Dorsolateral prefrontal cortex (tissue), 120 donors: ENCODE measurements at regions of chr1 and their contacts with region 1.

Region 1: DNA sequence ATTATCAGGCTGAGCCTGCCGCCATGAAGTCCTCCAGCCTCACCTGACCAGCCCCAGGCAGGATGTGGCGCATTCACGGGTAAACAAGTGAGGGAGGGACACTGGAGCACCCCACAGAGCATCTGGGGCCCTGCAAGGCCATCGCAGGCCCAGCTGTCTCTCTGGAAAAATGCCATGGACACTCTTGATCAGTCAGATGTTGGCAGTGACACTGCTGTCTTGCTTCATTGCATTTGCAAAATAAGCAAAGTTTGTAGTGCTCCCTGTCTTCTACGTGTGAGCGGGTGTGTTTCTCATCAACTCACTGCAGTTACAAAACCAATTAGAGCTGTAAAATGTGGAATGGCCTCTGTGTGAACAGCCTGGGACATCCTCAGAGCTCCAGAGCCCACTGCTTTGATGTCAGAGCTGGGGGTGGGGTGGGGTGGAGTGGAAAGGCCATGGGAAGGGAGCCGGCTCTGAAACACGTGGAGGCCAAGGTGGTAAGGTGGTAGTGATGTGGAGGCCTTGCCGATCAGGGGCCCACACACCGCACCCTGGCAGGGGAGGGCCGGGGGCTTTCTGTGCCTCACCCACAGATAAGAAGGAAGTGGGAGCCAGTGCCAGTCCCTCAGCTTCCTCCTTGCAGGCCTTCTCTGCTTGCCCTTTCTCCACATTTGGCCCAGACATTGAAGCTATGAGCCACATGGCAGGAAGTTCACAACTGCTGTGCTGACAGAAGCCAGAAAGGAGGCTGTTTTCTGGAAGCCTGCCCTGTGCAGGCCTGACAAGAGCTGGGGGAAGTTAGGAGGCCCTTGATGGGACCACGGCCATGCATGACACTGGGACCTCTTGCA is 254.9 kb downstream of the RHOU start:
- DNase-seq: peak in 7 of 10 donors; percentile 31 to 68 (median 55)
- H3K4me3 ChIP-seq: no peak overlapping the region
- H3K27ac ChIP-seq: peak overlapping the region in 56 of 59 donors; percentile 9 to 81 (median 66)
- H3K27me3 ChIP-seq: no peaks in the 10 kb centered on the region
- CTCF ChIP-seq: no peak

Region 2: DNA sequence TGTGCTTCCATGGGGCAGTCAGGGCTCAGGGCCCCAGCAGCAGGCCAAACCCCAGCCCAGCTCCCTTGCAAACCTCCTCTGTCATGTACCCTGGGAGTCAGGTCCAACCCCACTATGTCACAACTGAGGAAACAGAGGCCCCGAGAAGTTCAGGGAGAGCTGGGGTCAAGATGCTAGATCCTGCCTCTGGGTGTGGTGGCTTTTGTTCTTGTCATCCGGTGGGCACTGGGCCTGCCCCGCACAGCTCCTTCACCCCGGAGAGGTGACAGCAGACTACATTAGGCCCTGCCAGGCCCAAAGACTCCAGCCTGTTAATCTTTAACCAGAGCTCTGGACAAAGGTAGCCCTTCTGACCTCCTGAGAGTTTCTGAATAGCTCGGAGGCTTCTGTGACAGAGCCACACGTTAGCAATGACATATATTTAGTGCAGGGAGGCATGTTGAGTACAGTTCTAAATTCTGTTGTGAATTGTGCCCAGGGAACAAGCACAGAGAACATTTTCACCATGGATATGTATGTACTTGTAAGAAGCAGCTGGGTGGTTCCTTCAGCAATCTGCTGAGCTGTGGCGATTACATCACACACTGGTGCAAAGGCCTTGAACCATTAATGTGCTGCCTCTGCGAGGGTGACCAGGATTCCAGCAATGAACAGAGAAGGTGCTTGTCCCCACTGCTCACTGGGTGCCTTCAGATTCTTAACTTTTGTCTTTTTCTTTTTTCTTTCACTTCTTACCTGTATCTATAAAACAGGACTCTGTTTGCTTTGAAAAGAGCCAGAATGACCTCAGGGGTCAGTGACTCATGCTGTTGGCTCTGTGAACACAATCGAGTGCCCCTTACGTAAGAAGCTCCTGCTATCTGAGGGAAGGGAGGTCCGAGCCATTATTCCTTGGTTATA is 152.1 kb before region 1 on chr1:
- intact Hi-C with region 1: loop called in 1 of 2 experiments (anchors 10 kb)
- DNase-seq: no peak
- H3K4me3 ChIP-seq: no peak overlapping the region
- H3K27ac ChIP-seq: peak overlapping the region in 58 of 59 donors; percentile 3 to 99 (median 93)
- H3K27me3 ChIP-seq: peaks cover 0 to 9% (median 0%) of the 10 kb centered on the region in 45 donors
- CTCF ChIP-seq: no peak

Region 3: GRCh38 chr1:228955691-228956090 is 34.5 kb before region 1 on chr1:
- intact Hi-C with region 1: loop called in 1 of 2 experiments (anchors 5 kb)
- DNase-seq: no peak
- H3K4me3 ChIP-seq: no peak overlapping the region
- H3K27ac ChIP-seq: peak overlapping the region in 1 of 59 donors; percentile 25
- H3K27me3 ChIP-seq: no peaks in the 10 kb centered on the region
- CTCF ChIP-seq: no peak